ENCODE measurements at regions of chr1 and their contacts with region 1.

Region 1: GRCh38 chr1:35882945-35883634 is at the start of gene AGO1:
- DNase-seq: peak; percentile 97
- ATAC-seq: peak; percentile 98
- total RNA-seq, gene AGO1: 17.5 TPM

Region 2: GRCh38 chr1:35930593-35931445 is 47.7 kb after region 1 on chr1 and contains the start of gene AGO3:
- intact Hi-C with region 1: loop called (anchors 5 kb)
- DNase-seq: peak; percentile 94
- ATAC-seq: peak; percentile 95
- total RNA-seq, gene AGO3: 12.0 TPM

Region 3: DNA sequence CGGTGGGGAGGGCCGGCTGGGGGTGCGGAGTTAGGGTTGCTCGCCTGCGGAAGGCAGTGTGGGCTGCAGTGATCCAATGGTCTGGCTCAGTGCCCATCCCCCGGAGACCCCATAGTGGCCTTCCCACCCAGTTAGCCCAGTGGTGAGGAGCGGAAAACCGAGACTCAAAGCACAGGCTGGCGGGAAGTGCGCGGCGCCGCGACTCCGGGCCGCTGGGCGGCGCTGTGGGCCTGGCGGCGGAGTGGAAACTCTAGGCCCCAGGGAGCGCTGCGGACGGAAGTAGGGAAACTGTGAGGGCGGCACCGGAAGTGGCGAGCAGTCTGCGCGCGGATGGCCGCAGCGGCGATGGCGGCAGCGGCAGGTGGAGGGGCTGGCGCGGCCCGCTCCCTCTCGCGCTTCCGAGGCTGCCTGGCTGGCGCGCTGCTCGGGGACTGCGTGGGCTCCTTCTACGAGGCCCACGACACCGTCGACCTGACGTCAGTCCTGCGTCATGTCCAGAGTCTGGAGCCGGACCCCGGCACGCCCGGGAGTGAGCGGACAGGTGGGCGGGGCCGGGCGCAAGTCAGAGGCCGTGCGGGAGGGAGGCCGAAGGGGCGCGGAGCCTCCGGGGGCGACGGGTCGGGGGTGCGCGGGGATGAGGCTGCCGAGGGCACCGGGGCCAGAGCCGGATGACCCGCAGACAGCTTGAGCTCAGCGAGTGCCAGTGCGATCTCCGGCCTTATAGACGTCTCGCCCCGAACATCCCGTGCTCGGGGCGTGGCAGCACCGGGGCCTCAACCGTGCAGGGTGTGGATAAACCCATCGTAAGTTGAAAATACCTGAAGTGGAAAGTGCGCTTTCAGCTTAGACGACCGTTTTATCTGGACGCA is 205.7 kb after region 1 on chr1 and contains the start of gene ADPRS:
- intact Hi-C with region 1: loop called (anchors 10 kb)
- DNase-seq: peak; percentile 94
- ATAC-seq: peak; percentile 94
- total RNA-seq, gene ADPRS: 18.1 TPM

Measured in Right ventricle myocardium inferior (tissue), 1 donor.